ENCODE measurements at regions of chr1 and their contacts with region 1.

Region 1: DNA sequence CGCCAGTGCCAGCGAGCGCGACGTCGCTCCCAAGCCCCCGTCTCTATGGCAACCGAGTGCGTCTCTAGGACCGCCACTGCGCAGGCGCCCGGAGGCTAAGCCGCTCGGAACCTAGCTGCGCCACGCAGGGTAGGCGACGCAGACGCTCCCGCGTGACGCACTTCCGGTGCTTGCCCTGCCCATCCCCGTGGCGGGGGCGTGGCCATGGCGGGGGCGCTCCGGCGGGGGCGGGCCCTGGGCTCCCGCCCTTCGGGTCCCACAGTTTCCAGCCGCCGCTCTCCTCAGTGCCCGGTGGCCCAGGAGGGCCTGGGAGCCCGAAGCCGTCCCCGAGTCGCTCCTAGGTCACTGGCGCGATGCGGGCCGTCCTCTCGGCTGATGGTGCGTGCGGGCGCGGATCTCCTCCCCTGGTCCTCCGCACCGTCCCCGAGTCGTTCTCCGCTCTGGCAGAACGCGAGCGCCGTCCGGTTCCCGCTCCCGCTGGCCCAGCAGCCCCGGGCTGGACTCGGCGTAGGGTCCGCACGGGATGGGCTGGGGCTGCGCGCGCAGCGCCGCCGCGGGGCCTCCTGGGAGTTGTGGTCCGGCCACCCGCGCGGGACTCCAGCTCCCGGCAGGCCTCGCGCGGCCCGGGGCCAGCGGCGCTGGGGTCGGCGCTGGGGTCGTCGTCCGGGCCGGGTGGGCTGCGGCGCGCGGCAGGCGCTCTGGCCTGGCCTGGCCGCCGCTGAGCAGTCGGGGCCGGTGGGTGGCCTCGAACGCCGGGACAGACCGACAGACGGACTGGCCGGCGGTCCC is at the start of gene MIB2:
- DNase-seq: peak; percentile 98
- H3K4me3 Mint-ChIP-seq: peak within 1 kb of the TSS; percentile 92
- H3K27ac Mint-ChIP-seq: peak within 1 kb of the TSS; percentile 99
- H3K4me1 Mint-ChIP-seq: peaks cover 25% of the 10 kb centered on the region
- H3K27me3 Mint-ChIP-seq: no peaks in the 10 kb centered on the region
- total RNA-seq, gene MIB2: 29.5 and 32.8 TPM in 2 replicates

Region 2: DNA sequence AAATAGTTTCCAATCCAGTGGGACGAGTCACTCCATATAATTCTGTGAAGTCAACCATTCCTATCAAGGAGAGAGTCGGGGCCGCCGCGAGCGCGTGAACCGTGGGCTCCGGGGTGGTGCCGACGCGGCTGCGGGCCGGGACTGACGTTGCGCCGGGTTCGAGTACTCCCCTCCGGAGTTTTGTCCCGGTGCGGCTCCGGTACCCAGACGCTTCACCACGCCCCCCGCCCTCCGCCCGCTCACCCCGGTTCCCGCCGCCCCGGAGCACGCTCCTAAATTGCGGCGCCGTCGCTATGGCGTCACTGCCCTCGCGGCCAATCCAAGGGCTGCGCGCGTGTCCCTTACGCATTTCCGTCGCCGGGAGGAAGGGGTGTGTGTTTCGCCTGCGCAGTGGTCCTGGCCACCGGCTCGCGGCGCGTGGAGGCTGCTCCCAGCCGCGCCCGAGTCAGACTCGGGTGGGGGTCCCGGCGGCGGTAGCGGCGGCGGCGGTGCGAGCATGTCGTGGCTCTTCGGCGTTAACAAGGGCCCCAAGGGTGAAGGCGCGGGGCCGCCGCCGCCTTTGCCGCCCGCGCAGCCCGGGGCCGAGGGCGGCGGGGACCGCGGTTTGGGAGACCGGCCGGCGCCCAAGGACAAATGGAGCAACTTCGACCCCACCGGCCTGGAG is 143.9 kb before region 1 on chr1 and contains the start of gene ATAD3B:
- intact Hi-C with region 1: loop called (anchors 1 kb)
- DNase-seq: peak; percentile 92
- H3K4me3 Mint-ChIP-seq: peak within 1 kb of the TSS; percentile 88
- H3K27ac Mint-ChIP-seq: peak within 1 kb of the TSS; percentile 86
- H3K4me1 Mint-ChIP-seq: peaks cover 10% of the 10 kb centered on the region
- H3K27me3 Mint-ChIP-seq: no peaks in the 10 kb centered on the region
- total RNA-seq, gene ATAD3B: 106 and 113 TPM in 2 replicates

Region 3: GRCh38 chr1:1511533-1512285 is 103.7 kb before region 1 on chr1 and contains the start of gene ATAD3A:
- intact Hi-C with region 1: loop called (anchors 2 kb)
- DNase-seq: peak; percentile 95
- H3K4me3 Mint-ChIP-seq: peak within 1 kb of the TSS; percentile 97
- H3K27ac Mint-ChIP-seq: peak within 1 kb of the TSS; percentile 92
- H3K4me1 Mint-ChIP-seq: peaks cover 7% of the 10 kb centered on the region
- H3K27me3 Mint-ChIP-seq: no peaks in the 10 kb centered on the region
- total RNA-seq, gene ATAD3A: 108 TPM in 2 replicates

Region 4: GRCh38 chr1:1574721-1575537 is 40.5 kb before region 1 on chr1 and contains the start of gene SSU72:
- intact Hi-C with region 1: loop called (anchors 1 kb)
- DNase-seq: peak; percentile 91
- H3K4me3 Mint-ChIP-seq: peak within 1 kb of the TSS; percentile 95
- H3K27ac Mint-ChIP-seq: peak within 1 kb of the TSS; percentile 98
- H3K4me1 Mint-ChIP-seq: peaks cover 20% of the 10 kb centered on the region
- H3K27me3 Mint-ChIP-seq: peaks cover 3% of the 10 kb centered on the region
- total RNA-seq, gene SSU72: 135 and 137 TPM in 2 replicates

Region 5: GRCh38 chr1:1630271-1630964 is 15.0 kb after region 1 on chr1:
- intact Hi-C with region 1: loop called (anchors 2 kb)
- DNase-seq: peak; percentile 94
- H3K4me3 Mint-ChIP-seq: peak overlapping the region; percentile 85
- H3K27ac Mint-ChIP-seq: peak overlapping the region; percentile 89
- H3K4me1 Mint-ChIP-seq: no peaks in the 10 kb centered on the region
- H3K27me3 Mint-ChIP-seq: peaks cover 4% of the 10 kb centered on the region

Region 6: GRCh38 chr1:1721201-1721600 is 105.8 kb after region 1 on chr1:
- intact Hi-C with region 1: loop called (anchors 10 kb)
- DNase-seq: no peak
- H3K4me3 Mint-ChIP-seq: peak overlapping the region; percentile 10
- H3K27ac Mint-ChIP-seq: no peak overlapping the region
- H3K4me1 Mint-ChIP-seq: peaks cover 5% of the 10 kb centered on the region
- H3K27me3 Mint-ChIP-seq: no peaks in the 10 kb centered on the region

Region 7: DNA sequence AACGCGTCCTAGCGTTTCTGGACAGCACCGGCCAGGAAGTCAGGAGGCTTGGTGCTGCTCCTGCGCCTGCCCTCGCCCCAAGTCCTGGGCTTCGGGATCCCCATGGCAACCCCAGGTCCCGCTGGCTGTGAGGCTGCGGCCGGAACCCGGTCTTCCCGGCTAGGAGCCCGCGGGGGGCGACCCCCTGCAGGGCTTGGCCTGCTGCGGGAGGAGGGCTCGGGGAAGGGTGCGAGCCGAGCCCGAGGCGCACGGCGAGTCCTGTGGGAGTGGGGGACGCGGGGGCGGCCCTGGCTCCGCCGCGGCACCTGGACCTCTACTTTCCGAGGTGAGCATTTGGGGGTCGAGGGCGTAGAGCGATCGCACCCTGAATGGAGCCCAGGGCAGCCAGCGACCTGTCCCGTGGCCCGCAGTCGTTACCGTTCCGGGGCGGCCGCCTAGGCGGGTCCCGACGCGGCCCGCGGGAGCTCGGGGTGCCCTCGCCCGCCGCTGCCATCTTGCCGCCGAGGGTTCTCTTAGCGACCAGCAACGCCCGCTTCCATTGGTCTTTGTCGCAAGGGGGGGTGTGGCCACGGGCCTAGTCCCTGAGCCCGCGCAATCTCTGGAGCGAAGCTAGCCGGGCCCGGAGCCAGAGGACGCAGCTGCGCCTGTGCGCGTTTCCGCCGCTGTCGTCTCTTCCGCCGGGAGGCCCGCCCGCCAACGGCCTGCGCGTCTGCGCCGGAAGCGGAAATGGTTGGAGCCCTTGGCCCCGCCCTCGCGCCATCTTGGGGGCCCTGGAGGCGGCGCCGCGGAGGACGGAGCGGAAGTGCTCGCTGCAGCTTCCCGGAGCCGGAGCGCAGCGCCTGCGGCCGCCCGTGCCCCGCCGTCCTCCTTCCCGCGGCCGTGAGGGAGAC is 775.8 kb after region 1 on chr1 and contains the starts of genes MORN1 and RER1:
- intact Hi-C with region 1: loop called (anchors 10 kb)
- DNase-seq: peak; percentile 99
- H3K4me3 Mint-ChIP-seq: peak within 1 kb of the TSS; percentile 88
- H3K27ac Mint-ChIP-seq: peak within 1 kb of the TSS; percentile 82
- H3K4me1 Mint-ChIP-seq: peaks cover 28% of the 10 kb centered on the region
- H3K27me3 Mint-ChIP-seq: no peaks in the 10 kb centered on the region
- total RNA-seq, gene MORN1: 8.4 and 8.6 TPM in 2 replicates
- total RNA-seq, gene RER1: 161 and 177 TPM in 2 replicates

Measured in activated T-helper 1 cell treated with anti-CD3 and anti-CD28 coated beads, Interleukin-12 subunit alpha, Interleukin-12 subunit beta, Interleukin-2, Interleukin-4 antibody, amounts not matched to agents 30 ng/mL and 10 ng/mL and 1 ng/mL, durations not matched to agents 14 hours and 24 hours and 36 hours (primary cell).